GM13977 (cell line): ENCODE measurements at regions of chr12 and their contacts with region 1.

Region 1: DNA sequence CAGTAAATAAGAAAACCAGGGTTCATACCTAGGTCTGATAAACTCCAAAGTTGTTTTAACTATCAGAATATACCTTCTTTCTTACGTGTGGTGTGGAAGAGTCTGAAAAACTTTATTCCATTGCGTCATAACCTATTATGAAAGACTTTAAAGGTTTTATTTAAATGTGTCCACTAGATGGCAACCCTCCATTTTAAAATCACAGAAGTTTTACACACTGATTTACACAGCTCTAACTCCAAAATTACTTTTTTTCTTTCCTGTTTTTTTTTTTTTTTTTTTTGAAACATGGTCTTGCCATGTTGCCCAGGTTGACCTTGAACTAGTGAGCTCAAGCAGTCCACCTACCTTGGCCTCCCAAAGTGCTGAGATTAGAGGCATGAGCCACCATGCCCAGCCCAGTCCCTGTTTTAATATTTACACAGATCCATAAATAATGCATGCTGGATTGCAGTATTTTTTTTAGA is 17.3 kb upstream of the TMPRSS12 start:
- DNase-seq: peak; percentile 39
- CTCF ChIP-seq: peak; percentile 41

Region 2: GRCh38 chr12:50986966-50987737 is 161.7 kb after region 1 on chr12:
- in situ Hi-C with region 1: loop called (anchors 10 kb)
- DNase-seq: peak; percentile 34
- CTCF ChIP-seq: peak; percentile 72